Activated CD4-positive, alpha-beta memory T cell treated with anti-CD3 and anti-CD28 coated beads, Interleukin-2, amount 10 ng/mL, durations not matched to agents 7 days and 5 days (primary cell): ENCODE measurements at regions of chr15 and their contacts with region 1.

Region 1: DNA sequence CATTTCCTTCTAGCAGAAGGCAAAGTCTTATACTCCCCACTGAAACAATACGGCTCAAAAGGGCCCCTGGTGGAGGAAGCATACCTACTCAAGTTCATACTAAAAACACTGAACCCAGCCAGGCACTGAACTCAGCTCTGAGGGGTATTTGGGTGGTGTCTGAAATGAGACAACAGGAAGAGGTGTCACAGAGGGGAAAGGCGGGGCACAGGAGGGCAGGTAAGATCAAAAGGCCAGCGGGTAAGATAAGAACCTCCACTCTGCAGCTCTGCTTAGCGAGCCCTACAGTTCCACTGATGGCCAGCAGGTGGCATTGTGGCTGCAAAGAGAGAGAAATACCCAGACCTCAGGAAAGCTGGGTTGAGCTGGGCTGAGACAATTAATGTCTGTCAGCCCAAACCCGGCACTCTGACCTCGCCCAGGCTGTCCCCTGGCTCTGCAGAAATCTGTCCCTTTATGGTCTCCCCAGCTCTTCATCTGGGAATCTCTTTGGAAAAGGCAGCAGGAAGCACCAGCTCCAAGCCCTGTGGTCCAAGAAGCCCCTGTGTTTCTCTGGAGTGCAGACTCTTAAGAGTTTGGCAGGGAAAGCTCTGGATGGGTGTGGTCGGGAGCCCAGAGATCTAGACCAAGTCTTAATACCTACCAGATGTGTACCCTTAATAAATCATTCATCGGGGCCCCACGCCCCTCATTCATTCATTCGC is 8.4 kb downstream of the MFGE8 start:
- DNase-seq: peak; percentile 94
- H3K4me3 Mint-ChIP-seq: no peak overlapping the region
- H3K27ac Mint-ChIP-seq: peak overlapping the region; percentile 77
- H3K4me1 Mint-ChIP-seq: peaks cover 30% of the 10 kb centered on the region
- H3K27me3 Mint-ChIP-seq: no peaks in the 10 kb centered on the region

Region 2: GRCh38 chr15:88878720-88879184 is 26.0 kb before region 1 on chr15:
- CTCF ChIA-PET with region 1: interaction called, 19 read pairs
- POLR2A ChIA-PET with region 1: interaction called, 3 read pairs
- DNase-seq: peak; percentile 52
- H3K4me3 Mint-ChIP-seq: no peak overlapping the region
- H3K27ac Mint-ChIP-seq: no peak overlapping the region
- H3K4me1 Mint-ChIP-seq: no peaks in the 10 kb centered on the region
- H3K27me3 Mint-ChIP-seq: no peaks in the 10 kb centered on the region

Region 3: DNA sequence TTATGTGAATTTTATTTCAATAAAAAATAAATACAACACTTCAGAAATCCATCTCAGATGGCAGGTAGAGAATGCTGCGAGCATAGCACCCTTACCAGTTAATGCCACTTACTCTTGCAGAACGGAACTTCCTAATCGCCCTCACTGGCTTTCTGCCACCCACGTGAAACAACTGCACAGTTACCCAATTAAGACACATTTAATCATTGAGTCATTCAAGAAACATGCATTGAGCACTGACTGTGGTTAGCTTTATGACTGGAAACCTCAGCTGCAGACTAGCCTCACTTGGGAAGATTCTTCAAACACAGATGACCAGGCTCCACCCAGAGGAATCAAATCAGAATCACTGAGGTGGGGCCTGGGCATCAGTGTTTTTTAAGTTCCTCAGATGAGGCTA is 14.0 kb after region 1 on chr15:
- CTCF ChIA-PET with region 1: interaction called, 54 read pairs
- POLR2A ChIA-PET with region 1: interaction called, 8 read pairs
- DNase-seq: peak; percentile 59
- H3K4me3 Mint-ChIP-seq: no peak overlapping the region
- H3K27ac Mint-ChIP-seq: peak overlapping the region; percentile 68
- H3K4me1 Mint-ChIP-seq: peaks cover 41% of the 10 kb centered on the region
- H3K27me3 Mint-ChIP-seq: peaks cover 5% of the 10 kb centered on the region

Region 4: DNA sequence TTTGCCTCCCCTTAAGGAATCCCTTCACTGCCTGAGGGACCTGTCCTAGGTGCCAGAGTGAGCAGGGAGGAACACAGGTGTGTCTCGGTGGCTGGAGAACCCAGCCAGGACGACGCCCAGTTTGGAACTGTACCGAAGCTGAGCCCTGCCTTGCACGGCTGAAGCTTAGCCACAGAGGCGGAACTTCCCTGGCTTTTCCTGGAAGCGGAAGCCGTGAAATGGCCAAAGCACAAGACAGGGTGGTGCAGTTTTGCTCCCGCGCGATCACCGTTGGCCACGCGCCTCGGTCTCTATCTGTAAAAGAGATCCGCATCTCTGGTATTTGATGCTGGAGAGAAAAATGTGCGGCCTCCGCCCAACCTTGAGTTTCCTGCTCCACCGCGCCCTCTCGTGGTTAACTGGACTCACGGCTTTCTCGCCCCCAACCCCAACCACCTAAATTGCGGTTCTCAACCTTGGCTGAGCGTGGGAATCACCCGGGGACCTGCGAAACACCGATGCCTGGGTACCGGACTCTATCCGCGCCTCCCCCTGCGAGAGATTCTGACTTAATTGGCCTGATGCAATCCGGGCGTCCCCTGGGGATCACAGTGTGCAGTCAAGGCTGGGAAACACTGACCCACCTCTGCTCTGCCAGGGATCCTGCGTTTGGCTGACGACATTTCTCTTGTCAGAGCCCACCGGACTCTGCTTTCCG is 112.7 kb after region 1 on chr15:
- CTCF ChIA-PET with region 1: interaction called, 81 read pairs
- POLR2A ChIA-PET with region 1: interaction called, 10 read pairs
- DNase-seq: peak; percentile 86
- H3K4me3 Mint-ChIP-seq: peak overlapping the region; percentile 57
- H3K27ac Mint-ChIP-seq: peak overlapping the region; percentile 57
- H3K4me1 Mint-ChIP-seq: peaks cover 37% of the 10 kb centered on the region
- H3K27me3 Mint-ChIP-seq: peaks cover 33% of the 10 kb centered on the region

Region 5: DNA sequence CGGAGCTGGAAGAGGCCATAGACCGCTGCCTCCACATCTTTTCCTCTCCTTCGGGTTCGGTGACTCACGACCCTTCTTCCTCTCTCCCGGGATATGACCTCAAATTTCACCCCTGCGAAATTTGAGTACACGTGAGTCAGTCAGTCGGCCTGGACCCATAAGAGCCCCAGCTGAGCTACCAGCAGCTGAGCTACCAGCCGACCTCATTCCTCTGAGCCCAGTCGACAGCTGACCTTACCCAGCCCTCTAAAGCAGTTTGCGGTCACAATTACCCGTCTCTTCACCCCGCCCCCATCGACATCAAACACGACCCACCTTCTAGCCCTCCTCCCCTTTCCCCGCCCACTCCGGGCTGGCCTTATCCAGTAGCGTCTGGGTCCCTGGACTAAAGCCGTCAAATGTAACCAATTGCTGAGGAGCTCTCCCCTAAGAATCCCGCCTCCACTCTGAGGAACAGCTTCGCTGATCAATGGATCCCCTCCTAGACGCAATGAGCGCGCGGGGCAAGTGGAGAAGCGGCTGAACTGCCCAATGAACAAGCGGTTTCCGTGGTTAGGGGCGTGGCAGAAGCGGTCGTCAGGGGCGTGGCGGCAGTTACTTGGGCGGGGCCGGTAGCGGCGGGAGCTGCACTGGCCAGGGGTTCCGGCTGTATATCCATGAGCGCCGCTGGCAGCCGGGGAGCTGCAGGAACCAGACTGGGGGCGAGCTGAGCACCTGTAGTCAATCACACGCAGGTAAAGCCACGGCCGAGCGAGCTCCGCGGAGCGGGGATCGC is 183.2 kb after region 1 on chr15 and contains the start of gene ABHD2:
- CTCF ChIA-PET with region 1: interaction called, 19 read pairs
- POLR2A ChIA-PET with region 1: interaction called, 10 read pairs
- DNase-seq: peak; percentile 99
- H3K4me3 Mint-ChIP-seq: no peak within 1 kb of the TSS
- H3K27ac Mint-ChIP-seq: peak within 1 kb of the TSS; percentile 40
- H3K4me1 Mint-ChIP-seq: peaks cover 30% of the 10 kb centered on the region
- H3K27me3 Mint-ChIP-seq: no peaks in the 10 kb centered on the region
- total RNA-seq, gene ABHD2: 62.4 to 63.5 TPM

Region 6: DNA sequence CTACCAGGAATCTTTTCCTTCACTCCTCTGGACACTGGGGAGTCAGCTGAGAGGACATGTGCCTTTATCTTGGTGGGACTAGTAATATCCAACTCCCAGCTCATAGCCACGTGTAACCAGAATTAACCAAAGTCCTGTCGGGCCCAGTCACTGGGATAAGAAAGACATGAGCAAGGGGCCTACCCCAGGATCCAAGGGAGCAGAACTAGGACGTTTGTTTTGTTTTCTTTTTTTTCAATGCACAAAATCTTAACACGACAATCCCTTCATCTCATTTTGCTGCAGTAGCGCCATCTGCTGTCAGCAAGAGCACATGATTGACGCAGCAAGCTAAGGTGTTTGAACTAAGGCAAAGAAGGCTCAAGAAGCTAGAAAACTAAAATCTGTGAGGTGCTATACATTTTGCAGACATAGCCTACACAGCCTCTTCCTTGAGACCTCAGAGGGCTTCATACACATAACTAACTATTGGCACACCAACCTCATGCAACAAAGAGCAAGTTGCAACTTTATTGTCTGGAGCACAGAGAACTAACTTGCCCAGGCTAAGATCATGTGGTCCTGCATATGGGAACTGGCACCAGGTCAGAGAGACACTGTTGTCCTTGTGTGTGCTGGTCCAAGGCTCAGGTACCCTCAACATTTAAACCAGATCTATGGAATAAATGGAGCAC is 273.0 kb after region 1 on chr15:
- CTCF ChIA-PET with region 1: interaction called, 24 read pairs
- POLR2A ChIA-PET with region 1: interaction called, 3 read pairs
- DNase-seq: peak; percentile 72
- H3K4me3 Mint-ChIP-seq: no peak overlapping the region
- H3K27ac Mint-ChIP-seq: no peak overlapping the region
- H3K4me1 Mint-ChIP-seq: peaks cover 17% of the 10 kb centered on the region
- H3K27me3 Mint-ChIP-seq: no peaks in the 10 kb centered on the region